Prostate gland (tissue), 2 donors: ENCODE measurements at regions of chr11 and their contacts with region 1.

Region 1: GRCh38 chr11:125345421-125346178 is 150.5 kb downstream of the FEZ1 start:
- DNase-seq: peak; percentile 62
- H3K4me3 ChIP-seq: no peak overlapping the region
- H3K27ac ChIP-seq: peak overlapping the region; percentile 21 to 46
- H3K4me1 ChIP-seq: peaks cover 5% of the 10 kb centered on the region
- H3K27me3 ChIP-seq: no peaks in the 10 kb centered on the region
- CTCF ChIP-seq: peak; percentile 80 to 92 (median 87)
- POLR2A ChIP-seq: no peak

Region 2: DNA sequence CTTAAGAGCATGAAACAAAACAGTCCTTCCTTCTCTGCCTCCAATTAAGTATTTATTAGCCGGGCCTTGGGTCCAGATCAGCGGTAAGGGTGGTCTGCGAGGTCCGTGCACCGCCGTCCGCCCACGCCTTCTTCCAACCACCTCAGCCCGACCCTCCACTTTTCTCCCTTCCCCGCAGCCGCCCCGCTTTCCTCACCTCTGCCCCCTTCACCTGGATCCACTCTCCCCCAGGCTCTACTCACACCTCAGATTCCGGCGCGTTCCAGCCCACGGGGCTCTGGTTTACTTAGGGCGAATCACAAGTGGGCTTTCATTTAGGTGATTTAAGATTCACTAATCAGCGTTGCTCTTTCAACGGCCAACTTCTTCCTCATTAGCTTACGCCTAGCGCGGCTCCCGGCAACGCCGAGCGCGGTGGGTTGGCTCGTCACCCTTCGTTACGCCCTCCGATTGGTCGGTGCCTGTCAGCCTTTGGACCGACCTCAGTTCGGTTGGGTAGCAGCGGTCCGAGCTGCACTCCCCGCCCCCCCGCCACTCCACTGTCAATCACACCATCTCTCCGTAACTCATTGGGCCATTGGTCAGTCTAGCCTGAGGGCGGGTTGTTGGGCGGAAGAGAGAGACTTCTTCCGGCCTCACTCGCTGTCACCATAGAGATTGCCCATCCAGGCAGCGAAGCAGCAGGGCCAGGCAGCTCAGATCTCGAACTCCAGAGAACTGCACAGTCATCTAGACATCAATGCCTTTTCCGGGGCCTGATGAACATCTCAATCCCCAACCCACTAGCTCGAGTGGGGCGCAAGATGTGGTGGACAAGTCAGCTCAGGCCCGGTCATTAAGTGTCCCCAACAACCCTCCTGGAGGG is 234.0 kb before region 1 on chr11 and contains the start of gene TMEM218:
- intact Hi-C with region 1: loop called (anchors 5 kb)
- DNase-seq: peak; percentile 98
- H3K4me3 ChIP-seq: peak within 1 kb of the TSS; percentile 66 to 93
- H3K27ac ChIP-seq: peak within 1 kb of the TSS; percentile 74 to 88
- H3K4me1 ChIP-seq: peaks cover 3% of the 10 kb centered on the region
- H3K27me3 ChIP-seq: no peaks in the 10 kb centered on the region
- CTCF ChIP-seq: no peak
- POLR2A ChIP-seq: no peak
- total RNA-seq, gene TMEM218: 17.7 to 33.5 TPM

Region 3: DNA sequence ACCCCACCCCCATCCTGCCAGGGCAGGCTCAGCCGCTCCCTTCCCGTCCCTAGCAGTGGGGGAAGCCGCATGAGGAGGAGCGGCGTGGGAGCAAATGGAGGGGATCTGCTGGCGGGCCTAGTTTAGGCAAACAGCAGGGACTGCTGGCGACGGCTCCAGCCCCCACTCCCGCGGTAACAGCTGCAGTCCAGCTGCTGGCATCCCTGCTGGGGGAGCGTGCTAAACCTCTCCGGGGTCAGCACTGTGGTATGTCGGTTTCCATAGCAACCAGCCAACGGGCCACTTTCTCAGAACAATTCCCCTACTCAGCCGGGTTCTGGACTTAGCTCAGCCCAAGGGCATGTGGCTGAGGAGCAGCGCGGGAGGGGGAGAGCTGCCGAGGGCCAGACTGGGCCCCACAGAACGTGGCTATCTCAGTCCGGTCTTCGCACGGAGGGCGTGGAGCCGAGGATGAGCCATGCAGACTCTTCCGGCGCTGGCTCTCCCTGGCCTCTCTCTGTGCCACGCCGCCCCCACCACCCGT is 82.3 kb before region 1 on chr11:
- intact Hi-C with region 1: loop called (anchors 5 kb)
- DNase-seq: no peak
- H3K4me3 ChIP-seq: no peak overlapping the region
- H3K27ac ChIP-seq: no peak overlapping the region
- H3K4me1 ChIP-seq: no peaks in the 10 kb centered on the region
- H3K27me3 ChIP-seq: no peaks in the 10 kb centered on the region
- CTCF ChIP-seq: no peak
- POLR2A ChIP-seq: no peak